GM12878 (cell line): ENCODE measurements at regions of chr1 and their contacts with region 1.

Region 1: DNA sequence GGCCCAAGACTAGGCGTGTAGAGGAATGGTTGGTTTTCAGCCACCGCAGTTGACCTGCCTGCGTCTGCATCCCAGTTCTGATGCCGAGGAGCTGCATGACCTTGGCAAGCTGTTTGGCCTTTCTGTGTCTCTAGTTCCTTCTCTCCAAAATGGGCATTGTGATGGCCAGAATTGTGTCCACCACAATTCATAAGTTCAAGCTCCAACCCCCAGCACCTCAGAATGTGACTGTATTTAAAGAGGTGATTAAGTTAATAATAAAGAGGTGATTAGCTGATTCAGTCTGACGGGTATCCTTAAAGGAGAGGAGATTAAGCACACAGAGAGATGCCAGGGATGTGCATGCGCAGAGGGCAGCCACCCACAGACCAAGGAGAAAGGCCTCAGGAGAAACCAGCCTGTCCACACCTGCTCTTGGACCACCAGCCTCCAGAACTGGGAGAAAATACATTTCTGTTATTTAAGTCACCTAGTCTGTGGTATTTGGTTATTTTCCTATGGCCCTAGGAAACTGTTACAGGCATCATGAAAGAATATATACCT is 28.5 kb downstream of the MAB21L3 start:
- DNase-seq: no peak
- ATAC-seq: no peak
- H3K4me3 ChIP-seq: no peak overlapping the region
- H3K27ac ChIP-seq: no peak overlapping the region
- H3K4me1 ChIP-seq: peaks cover 2% of the 10 kb centered on the region; the same call in 1 of the 2 replicates
- H3K27me3 ChIP-seq: no peaks in the 10 kb centered on the region
- CTCF ChIP-seq: no peak
- EP300 ChIP-seq: no peak
- POLR2A ChIP-seq: no peak
- RAD21 ChIP-seq: no peak

Region 2: DNA sequence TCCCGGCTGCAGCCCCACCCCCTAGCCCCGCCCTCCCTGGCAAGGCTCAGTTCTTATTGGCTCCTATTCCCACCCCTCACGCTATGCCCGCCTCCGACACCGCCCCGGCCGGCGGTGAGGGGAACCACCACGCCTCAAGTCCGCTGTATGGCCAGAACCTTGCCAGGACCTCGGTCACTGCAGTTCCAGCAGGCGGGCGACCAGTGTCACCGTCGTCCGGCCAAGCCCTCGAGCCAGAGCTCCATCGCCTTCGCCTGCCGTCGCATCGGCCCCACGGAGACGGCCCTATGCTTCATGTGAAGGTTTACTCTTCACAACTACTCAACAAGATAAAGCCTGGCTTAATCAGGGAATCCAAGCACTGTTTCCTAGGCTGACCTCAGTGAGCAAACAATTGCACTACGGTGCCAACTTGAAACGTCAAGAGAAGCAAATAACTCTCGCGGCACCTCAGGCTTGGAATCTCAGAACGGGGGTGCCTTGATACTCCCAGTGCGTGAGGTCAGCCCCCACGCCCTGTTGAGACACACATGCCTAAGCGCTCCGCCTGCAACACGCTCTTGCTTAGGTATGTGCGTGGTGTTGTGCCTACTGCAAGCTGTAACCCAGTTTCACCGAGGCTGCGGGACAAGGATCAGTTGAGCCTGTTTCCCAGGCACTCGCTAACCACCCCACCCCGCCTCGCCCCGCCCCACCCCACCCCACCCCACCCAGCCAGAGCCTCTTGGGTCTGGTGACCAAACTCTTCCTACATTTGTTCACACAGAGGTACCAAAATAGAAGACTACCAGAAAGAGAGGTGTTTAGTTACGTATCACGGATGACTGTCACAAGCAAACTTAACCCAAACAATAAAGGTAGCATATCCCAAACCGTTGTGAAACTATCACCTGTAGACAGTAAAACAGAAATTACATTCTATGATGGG is 1469.3 kb before region 1 on chr1:
- CTCF ChIA-PET with region 1: no interaction called
- POLR2A ChIA-PET with region 1: no interaction called
- RAD21 ChIA-PET with region 1: no interaction called
- SMC1A ChIA-PET with region 1: no interaction called
- in situ Hi-C with region 1: no loop called
- intact Hi-C with region 1: no loop called
- DNase-seq: peak; percentile 33
- ATAC-seq: peak; percentile 100
- H3K4me3 ChIP-seq: peak overlapping the region; percentile 74
- H3K27ac ChIP-seq: no peak overlapping the region
- H3K4me1 ChIP-seq: peaks cover 5% of the 10 kb centered on the region
- H3K27me3 ChIP-seq: no peaks in the 10 kb centered on the region; a peak in 1 of 4 replicates
- CTCF ChIP-seq: no peak
- EP300 ChIP-seq: no peak
- POLR2A ChIP-seq: 0 out of 2 replicates have a peak, but pooled peaks have one; percentile 38
- RAD21 ChIP-seq: no peak

Region 3: DNA sequence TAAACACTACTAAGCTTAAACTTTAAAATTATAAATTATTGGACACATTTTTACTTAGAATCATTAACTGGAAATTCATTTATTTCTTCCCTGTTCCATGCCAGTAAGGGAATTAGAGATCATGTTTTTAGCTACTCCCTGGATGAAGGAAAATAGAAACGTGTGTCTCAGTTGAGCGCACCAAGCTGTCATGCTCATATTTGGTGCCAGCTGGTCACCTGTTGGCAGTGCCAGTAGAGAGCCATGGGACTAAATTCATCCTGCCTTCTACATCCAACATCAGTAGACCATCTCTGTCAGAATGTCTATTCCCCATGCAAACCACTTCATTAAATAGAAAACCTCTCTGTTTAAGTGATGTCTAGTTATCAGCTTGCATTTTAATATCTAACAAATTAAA is 180.8 kb before region 1 on chr1:
- CTCF ChIA-PET with region 1: no interaction called
- POLR2A ChIA-PET with region 1: no interaction called
- RAD21 ChIA-PET with region 1: no interaction called
- SMC1A ChIA-PET with region 1: no interaction called
- in situ Hi-C with region 1: no loop called
- intact Hi-C with region 1: no loop called
- DNase-seq: no peak
- ATAC-seq: no peak
- H3K4me3 ChIP-seq: no peak overlapping the region
- H3K27ac ChIP-seq: no peak overlapping the region
- H3K4me1 ChIP-seq: no peaks in the 10 kb centered on the region
- H3K27me3 ChIP-seq: no peaks in the 10 kb centered on the region
- CTCF ChIP-seq: no peak
- EP300 ChIP-seq: no peak
- POLR2A ChIP-seq: no peak
- RAD21 ChIP-seq: no peak

Region 4: DNA sequence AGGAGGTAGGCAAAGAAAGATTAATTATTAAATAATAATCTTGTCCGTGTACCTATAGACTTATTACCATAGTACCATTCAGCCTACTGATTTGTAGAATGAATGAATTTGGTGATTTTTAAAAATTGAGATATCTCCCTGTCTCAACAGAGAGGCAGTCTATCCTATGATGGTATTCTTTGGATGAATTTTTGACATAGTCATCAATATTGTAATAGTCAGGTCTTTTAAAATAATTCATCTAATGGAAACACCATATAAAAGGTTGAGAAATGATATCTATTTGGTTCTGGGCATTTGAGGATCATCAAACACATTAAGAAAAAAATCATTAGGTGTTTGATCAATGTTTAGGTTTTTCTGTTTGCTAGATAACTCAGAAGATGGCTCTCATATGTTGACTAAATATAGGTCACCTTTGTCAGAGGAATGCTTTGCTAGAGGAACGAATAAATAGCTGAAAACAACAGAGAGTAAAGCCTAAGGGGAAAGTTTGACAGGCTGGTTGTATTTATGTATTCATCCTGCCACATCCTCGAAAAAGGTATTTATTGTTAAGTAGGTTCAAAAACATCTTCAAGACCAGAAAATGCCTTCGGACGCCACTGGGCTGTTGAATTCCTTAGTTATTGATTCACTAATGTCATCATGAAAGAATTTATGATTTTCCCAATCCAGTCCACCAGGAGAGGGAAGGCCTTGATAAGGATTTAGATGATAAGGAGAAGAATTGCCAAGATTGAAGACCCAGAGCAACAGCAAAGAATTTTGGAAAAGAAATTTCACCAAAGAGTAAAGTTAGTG is 63.9 kb before region 1 on chr1:
- CTCF ChIA-PET with region 1: no interaction called
- POLR2A ChIA-PET with region 1: no interaction called
- RAD21 ChIA-PET with region 1: no interaction called
- SMC1A ChIA-PET with region 1: no interaction called
- in situ Hi-C with region 1: no loop called
- intact Hi-C with region 1: no loop called
- DNase-seq: no peak
- ATAC-seq: no peak
- H3K4me3 ChIP-seq: no peak overlapping the region
- H3K27ac ChIP-seq: no peak overlapping the region
- H3K4me1 ChIP-seq: no peaks in the 10 kb centered on the region
- H3K27me3 ChIP-seq: no peaks in the 10 kb centered on the region
- CTCF ChIP-seq: no peak
- EP300 ChIP-seq: no peak
- POLR2A ChIP-seq: no peak
- RAD21 ChIP-seq: no peak

Region 5: DNA sequence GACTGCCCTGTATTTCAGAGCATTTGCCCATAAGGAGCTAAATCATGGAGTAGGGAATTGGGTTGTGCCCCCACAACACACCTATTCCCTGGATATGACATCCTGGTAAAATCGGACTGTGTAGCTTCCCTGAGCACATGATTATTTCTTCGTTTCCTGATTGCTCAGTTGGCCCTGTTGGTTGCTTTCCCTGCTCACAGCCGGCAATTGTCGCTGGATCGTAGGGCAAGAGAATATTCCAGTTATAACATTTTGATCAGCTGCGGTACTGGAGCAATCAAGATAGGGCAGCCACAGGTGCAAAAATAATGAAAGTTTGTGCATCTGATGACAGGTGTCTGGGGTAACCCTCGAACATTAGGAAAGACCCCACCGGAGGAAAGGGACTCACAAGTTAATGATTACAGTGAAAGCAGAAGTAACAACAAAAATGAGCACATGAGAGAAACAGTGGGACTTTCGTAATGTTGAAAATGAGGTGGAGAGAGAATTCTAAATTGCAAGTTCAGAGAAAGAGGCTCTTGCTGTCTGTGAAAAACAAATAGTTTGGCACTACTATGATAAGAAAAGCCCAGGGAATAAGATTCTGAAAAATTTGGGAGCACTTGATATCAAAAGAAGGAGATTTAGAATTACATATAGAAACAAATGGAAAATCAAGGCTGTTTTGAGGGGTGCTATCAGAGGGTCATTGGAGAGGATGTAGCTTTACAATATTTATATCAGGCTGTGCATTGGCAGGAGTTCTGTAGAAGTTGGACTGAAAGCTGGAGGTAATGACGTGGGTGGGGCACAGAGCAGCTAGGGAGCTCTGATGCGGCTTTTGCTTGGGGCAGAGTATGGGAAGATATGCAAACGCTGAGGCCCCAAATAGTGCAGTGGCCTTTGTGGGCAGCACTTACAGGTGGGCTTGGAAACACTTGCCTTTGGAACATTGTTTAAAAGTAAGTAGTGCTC is 28.8 kb before region 1 on chr1 and contains the start of gene MAB21L3:
- CTCF ChIA-PET with region 1: interaction called, 29 read pairs
- POLR2A ChIA-PET with region 1: no interaction called
- RAD21 ChIA-PET with region 1: interaction called, 7 read pairs
- SMC1A ChIA-PET with region 1: interaction called, 8 read pairs
- in situ Hi-C with region 1: no loop called
- intact Hi-C with region 1: no loop called
- DNase-seq: peak; percentile 46
- ATAC-seq: peak; percentile 83
- H3K4me3 ChIP-seq: no peak within 1 kb of the TSS
- H3K27ac ChIP-seq: peak within 1 kb of the TSS; percentile 13; the same call in 1 of the 2 replicates
- H3K4me1 ChIP-seq: peaks cover 11% of the 10 kb centered on the region
- H3K27me3 ChIP-seq: no peaks in the 10 kb centered on the region
- CTCF ChIP-seq: no peak
- EP300 ChIP-seq: peak; percentile 30 to 48; a peak in 2 of 4 replicates
- POLR2A ChIP-seq: no peak
- RAD21 ChIP-seq: no peak
- polyA plus RNA-seq, gene MAB21L3: 0.18 to 0.35 TPM

Region 6: GRCh38 chr1:116151739-116152576 is 12.3 kb after region 1 on chr1:
- CTCF ChIA-PET with region 1: interaction called, 57 read pairs
- POLR2A ChIA-PET with region 1: interaction called, 4 read pairs
- RAD21 ChIA-PET with region 1: interaction called, 16 read pairs
- SMC1A ChIA-PET with region 1: interaction called, 18 read pairs
- in situ Hi-C with region 1: no loop called
- intact Hi-C with region 1: no loop called
- DNase-seq: peak; percentile 23
- ATAC-seq: peak; percentile 99
- H3K4me3 ChIP-seq: peak overlapping the region; percentile 41; the same call in 1 of the 2 replicates
- H3K27ac ChIP-seq: no peak overlapping the region
- H3K4me1 ChIP-seq: peaks cover 6% of the 10 kb centered on the region; the same call in 1 of the 2 replicates
- H3K27me3 ChIP-seq: no peaks in the 10 kb centered on the region; a peak in 2 of 4 replicates
- CTCF ChIP-seq: peak; percentile 80 to 95 (median 83); a peak in 4 of 6 replicates
- EP300 ChIP-seq: peak in 1 of 2 experiments; percentile 47; a peak in 1 of 4 replicates
- POLR2A ChIP-seq: no peak
- RAD21 ChIP-seq: peak; percentile 57

Region 7: DNA sequence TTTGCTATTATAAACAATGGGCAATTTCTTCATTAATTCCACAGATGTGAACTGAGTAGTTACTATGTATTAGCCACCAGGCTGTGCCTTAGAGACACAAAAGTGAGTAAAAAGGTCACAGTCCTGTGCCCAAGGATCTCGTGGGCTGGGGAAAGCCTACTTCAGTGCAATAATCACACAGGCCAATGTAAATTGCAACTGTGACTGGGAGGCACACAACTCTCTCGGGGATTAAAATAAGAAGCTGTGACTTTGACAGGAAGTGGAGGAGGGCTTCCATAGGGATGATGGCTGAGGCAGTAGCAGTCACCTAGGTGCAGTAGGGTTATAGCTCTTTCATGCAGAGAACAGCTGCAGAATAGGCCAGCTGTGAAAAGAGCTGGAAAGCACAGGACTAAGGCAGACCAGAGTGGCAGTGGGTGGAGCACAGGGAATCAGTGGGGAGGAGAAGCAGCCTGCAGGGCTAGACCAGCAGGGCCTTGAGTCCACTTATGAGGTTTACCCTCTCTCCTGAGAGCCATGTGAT is 93.4 kb after region 1 on chr1:
- CTCF ChIA-PET with region 1: interaction called, 11 read pairs
- POLR2A ChIA-PET with region 1: no interaction called
- RAD21 ChIA-PET with region 1: interaction called, 6 read pairs
- SMC1A ChIA-PET with region 1: interaction called, 6 read pairs
- in situ Hi-C with region 1: no loop called
- intact Hi-C with region 1: no loop called
- DNase-seq: peak; percentile 9
- ATAC-seq: peak; percentile 88
- H3K4me3 ChIP-seq: no peak overlapping the region
- H3K27ac ChIP-seq: no peak overlapping the region
- H3K4me1 ChIP-seq: no peaks in the 10 kb centered on the region; the same call in 1 of the 2 replicates
- H3K27me3 ChIP-seq: no peaks in the 10 kb centered on the region
- CTCF ChIP-seq: peak; percentile 10 to 52 (median 17); a peak in 2 of 6 replicates
- EP300 ChIP-seq: no peak
- POLR2A ChIP-seq: no peak
- RAD21 ChIP-seq: peak; percentile 54

Region 8: DNA sequence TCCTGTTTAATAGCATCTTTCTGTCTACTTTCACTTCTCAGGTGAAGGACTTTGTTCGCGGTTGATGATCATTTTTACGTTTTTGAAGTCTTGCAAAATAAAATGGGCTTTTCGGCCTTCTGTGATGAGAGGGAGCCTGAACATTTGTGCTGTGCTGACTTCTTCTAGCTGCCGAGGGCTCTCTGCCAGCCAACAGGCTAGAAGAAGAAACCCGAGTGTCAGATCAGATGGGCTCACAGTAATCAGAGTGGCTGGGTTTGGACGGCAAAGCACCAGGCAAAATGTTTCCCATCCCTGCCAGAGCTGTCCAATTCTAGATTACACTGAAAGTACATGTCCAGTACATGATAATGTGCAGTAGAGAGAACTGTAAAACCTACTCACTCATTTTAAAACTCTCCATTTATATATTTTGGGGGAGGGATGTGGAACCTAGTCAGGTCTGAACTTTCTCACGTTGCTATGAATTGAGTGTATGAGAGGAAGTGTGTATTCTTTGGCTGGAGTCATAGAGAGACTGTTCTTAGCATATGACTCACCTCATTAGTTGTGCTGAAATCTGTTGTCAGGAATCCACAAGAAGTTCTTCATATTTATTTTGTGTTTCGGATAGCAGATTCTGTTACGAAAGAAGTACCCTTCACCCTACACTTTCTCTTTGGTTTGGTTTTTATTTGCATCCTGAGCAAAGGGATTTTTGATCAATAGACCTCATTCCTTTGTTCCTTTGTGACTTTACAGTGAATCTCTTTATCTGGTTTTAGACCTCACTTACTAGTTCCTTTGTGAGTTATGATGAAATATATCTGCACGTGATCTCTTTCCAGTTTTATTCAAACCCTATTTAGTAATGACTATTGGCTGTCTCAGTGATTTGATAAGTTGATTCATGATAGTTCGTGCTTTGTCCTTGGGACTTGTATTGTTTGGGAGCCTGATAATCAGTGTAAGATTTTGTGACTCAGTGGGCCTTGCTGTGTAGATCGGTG is 238.2 kb after region 1 on chr1:
- CTCF ChIA-PET with region 1: interaction called, 18 read pairs
- POLR2A ChIA-PET with region 1: no interaction called
- RAD21 ChIA-PET with region 1: interaction called, 6 read pairs
- SMC1A ChIA-PET with region 1: interaction called, 20 read pairs
- in situ Hi-C with region 1: no loop called
- intact Hi-C with region 1: loop called (anchors 5 kb)
- DNase-seq: peak; percentile 96
- ATAC-seq: peak; percentile 60
- H3K4me3 ChIP-seq: peak overlapping the region; percentile 95
- H3K27ac ChIP-seq: peak overlapping the region; percentile 96
- H3K4me1 ChIP-seq: peaks cover 38% of the 10 kb centered on the region
- H3K27me3 ChIP-seq: no peaks in the 10 kb centered on the region
- CTCF ChIP-seq: no peak
- EP300 ChIP-seq: peak; percentile 84 to 92
- POLR2A ChIP-seq: peak; percentile 56
- RAD21 ChIP-seq: no peak

Region 9: DNA sequence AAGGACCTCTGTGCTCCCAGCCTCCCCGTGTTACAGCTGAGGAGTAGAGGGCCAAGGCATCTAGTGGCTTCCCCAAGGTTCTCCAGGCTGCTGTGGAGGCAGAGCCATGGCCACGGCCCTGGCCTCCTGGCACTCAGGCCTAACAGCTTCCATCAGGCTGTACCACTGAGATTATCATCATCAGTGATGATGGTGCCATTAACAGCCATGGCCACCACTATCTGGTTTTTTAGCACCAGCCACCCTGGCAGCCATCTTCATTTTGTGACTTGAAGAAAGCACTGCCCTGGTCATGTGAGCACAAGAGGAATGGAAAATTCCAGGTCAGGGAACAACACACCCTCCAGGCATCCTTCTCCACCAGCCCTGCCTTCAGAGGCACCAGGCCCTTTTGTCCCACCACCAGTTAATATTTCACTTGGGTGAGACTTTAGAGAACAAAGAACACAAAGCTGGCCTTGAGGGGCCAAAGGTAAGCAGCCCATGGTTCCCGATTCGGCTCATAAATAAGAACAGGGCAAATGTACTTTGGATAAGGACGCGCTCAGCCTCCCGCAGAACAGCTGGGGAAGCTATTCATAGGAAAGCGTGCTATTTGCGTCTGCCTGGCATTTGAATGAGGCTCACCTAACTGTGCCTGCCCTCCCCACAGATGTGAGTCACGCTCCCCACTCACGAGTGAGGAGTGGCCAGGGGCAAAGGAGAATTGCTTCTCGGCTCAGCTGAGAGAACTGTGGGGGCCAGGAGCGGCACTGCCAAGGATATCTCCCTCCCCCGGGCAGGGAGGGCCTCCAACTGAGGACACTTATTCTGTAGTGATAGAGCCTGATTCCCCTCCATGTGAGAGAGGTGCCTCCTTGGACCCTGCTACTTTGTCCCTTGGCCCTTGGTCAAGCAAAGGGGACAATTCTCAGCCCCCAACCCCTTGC is 335.5 kb after region 1 on chr1:
- CTCF ChIA-PET with region 1: interaction called, 12 read pairs
- POLR2A ChIA-PET with region 1: no interaction called
- RAD21 ChIA-PET with region 1: interaction called, 6 read pairs
- SMC1A ChIA-PET with region 1: interaction called, 6 read pairs
- in situ Hi-C with region 1: no loop called
- intact Hi-C with region 1: no loop called
- DNase-seq: no peak
- ATAC-seq: no peak
- H3K4me3 ChIP-seq: no peak overlapping the region
- H3K27ac ChIP-seq: no peak overlapping the region
- H3K4me1 ChIP-seq: no peaks in the 10 kb centered on the region
- H3K27me3 ChIP-seq: no peaks in the 10 kb centered on the region
- CTCF ChIP-seq: no peak
- EP300 ChIP-seq: no peak
- POLR2A ChIP-seq: no peak
- RAD21 ChIP-seq: no peak

Region 10: GRCh38 chr1:116504308-116505156 is 364.9 kb after region 1 on chr1:
- CTCF ChIA-PET with region 1: interaction called, 103 read pairs
- POLR2A ChIA-PET with region 1: interaction called, 8 read pairs
- RAD21 ChIA-PET with region 1: interaction called, 61 read pairs
- SMC1A ChIA-PET with region 1: interaction called, 36 read pairs
- in situ Hi-C with region 1: no loop called
- intact Hi-C with region 1: no loop called
- DNase-seq: peak; percentile 91
- ATAC-seq: peak; percentile 90
- H3K4me3 ChIP-seq: no peak overlapping the region
- H3K27ac ChIP-seq: peak overlapping the region; percentile 84
- H3K4me1 ChIP-seq: peaks cover 54% of the 10 kb centered on the region
- H3K27me3 ChIP-seq: no peaks in the 10 kb centered on the region
- CTCF ChIP-seq: no peak
- EP300 ChIP-seq: peak; percentile 43 to 69; a peak in 1 of 4 replicates
- POLR2A ChIP-seq: no peak
- RAD21 ChIP-seq: 0 out of 2 replicates have a peak, but pooled peaks have one; percentile 19